ENCODE measurements at regions of chr20 and their contacts with region 1.

Region 1: DNA sequence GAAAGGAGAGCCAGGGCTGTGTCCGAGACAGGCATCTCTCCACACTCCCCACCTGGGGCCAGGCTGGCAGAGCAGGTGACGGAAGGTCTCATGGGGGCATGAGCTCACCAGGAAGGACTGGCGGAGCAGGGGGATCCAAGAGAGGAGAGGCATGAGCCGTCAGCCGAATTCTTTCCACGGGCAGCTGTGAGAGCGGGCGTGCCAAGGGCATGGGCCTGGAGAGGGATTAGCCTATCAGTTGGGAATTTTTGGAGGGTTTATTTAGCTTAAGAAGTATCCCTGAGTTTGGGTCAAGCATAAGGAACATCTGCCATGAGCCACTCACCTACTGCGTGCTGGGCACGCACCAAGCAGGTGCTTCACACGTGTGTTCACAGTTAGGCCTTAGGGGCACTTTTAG is 60.2 kb upstream of the ZNFX1 start:
- DNase-seq: no peak
- ATAC-seq: no peak
- H3K4me3 Mint-ChIP-seq: no peak overlapping the region
- H3K27ac Mint-ChIP-seq: no peak overlapping the region
- H3K4me1 Mint-ChIP-seq: no peaks in the 10 kb centered on the region
- H3K27me3 Mint-ChIP-seq: peaks cover 5% of the 10 kb centered on the region
- CTCF ChIP-seq: no peak

Region 2: GRCh38 chr20:49207076-49207475 is 131.0 kb before region 1 on chr20:
- CTCF ChIA-PET with region 1: no interaction called
- POLR2A ChIA-PET with region 1: no interaction called
- intact Hi-C with region 1: no loop called
- DNase-seq: peak; percentile 45
- ATAC-seq: peak; percentile 56
- H3K4me3 Mint-ChIP-seq: no peak overlapping the region
- H3K27ac Mint-ChIP-seq: no peak overlapping the region
- H3K4me1 Mint-ChIP-seq: no peaks in the 10 kb centered on the region
- H3K27me3 Mint-ChIP-seq: no peaks in the 10 kb centered on the region
- CTCF ChIP-seq: peak; percentile 26

Region 3: DNA sequence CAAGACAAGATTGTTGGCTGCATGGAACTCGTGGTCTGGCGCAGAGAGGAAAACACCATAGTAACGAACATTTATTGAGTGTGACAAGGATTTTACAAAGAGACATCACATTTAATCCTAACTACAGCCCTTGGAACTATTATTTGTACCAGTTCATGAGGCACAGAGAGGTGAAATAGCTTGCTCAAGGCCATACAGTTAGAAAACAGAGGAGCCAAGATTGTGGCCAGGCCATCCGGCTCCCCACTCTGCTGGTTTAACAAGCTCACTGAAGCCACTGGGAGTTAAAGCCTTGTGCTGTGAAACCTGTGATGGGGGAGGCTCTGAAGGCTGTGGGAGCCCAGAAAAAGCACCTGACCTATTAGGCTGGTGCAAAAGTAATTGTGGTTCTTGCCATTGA is 14.7 kb after region 1 on chr20:
- CTCF ChIA-PET with region 1: interaction called, 36 read pairs
- POLR2A ChIA-PET with region 1: no interaction called
- intact Hi-C with region 1: no loop called
- DNase-seq: no peak
- ATAC-seq: no peak
- H3K4me3 Mint-ChIP-seq: no peak overlapping the region
- H3K27ac Mint-ChIP-seq: no peak overlapping the region
- H3K4me1 Mint-ChIP-seq: no peaks in the 10 kb centered on the region
- H3K27me3 Mint-ChIP-seq: peaks cover 8% of the 10 kb centered on the region
- CTCF ChIP-seq: no peak

Region 4: DNA sequence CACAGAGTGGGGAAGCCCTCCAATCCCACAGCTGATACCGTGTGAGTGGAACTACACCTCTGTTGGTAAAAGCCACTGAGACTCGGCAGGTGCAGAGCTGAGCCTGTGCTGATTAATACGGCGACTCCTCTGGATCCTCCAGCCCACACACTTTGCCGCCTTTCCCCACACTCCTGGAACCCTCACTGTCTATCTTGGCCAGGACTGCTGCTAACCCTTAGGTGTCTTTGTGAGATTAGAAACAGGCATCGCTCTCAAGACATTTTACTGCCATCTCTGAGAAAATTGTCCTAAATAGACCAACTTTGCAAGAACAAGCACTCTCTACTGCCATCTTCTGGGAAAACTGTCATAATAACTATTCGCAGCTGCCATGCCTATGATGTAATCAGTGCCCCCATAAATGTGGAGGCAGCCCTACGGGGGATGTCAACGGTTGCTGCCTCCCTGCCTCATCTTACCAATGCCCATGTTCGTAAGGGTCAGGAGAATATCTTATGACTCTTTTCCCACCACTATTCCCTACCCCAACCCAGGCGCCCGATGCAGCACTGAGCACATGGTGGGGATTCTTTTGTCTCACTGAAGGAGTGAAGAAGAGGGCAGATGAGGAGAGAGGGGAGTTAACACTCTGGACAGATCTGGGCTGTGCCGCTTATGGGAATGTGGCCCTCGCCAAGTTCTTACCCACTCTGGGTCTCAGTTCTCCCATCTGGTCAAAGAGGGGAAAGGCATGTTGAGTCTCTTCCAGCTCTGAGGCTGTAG is 170.6 kb after region 1 on chr20:
- CTCF ChIA-PET with region 1: interaction called, 48 read pairs
- POLR2A ChIA-PET with region 1: no interaction called
- intact Hi-C with region 1: no loop called
- DNase-seq: peak; percentile 10
- ATAC-seq: peak; percentile 53
- H3K4me3 Mint-ChIP-seq: no peak overlapping the region
- H3K27ac Mint-ChIP-seq: no peak overlapping the region
- H3K4me1 Mint-ChIP-seq: no peaks in the 10 kb centered on the region
- H3K27me3 Mint-ChIP-seq: peaks cover 28% of the 10 kb centered on the region
- CTCF ChIP-seq: peak; percentile 60

Region 5: DNA sequence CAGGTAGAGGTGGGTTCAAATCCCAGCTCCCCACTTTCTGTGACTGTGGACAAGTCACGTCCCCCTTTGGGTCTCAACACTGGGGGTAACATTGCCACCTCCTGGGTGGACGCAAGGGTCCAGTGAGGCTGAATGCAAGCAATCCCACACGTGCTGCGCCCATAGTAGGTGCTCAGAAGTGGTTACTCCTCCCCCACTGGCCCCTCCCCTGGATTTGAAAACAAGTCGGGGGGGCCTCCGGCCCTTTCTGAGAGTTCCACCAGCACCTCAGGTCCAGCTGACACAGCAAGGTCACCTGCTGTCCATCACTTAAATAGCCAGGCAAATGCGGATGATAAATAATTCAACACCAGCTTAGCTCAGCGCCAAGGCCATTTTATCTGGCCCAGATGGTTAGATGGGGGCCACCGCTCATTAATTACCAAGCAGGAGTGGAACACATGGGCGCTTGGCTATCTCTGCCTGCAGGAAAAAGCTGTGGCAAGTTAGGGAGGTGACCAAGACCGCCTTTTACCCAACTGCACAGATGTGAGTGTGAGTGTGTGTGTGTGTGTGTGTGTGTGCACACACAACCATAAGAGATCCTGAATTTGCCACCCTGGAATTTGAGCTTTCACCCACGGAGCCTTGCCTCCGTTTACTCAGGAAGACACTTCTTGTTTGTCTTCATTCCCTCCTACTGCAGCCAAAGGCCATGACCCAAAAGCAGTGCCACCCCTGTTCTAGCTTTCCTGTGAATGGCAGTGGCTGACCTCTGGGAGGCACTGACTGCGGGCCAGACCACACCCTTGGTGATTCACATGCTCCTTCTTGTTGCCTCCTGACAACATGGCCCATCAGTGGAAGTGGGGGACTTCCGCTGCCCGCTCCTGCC is 179.1 kb after region 1 on chr20:
- CTCF ChIA-PET with region 1: interaction called, 11 read pairs
- POLR2A ChIA-PET with region 1: no interaction called
- intact Hi-C with region 1: no loop called
- DNase-seq: no peak
- ATAC-seq: no peak
- H3K4me3 Mint-ChIP-seq: no peak overlapping the region
- H3K27ac Mint-ChIP-seq: no peak overlapping the region
- H3K4me1 Mint-ChIP-seq: no peaks in the 10 kb centered on the region
- H3K27me3 Mint-ChIP-seq: peaks cover 9% of the 10 kb centered on the region
- CTCF ChIP-seq: no peak

Region 6: GRCh38 chr20:49534255-49534712 is 196.2 kb after region 1 on chr20:
- CTCF ChIA-PET with region 1: interaction called, 30 read pairs
- POLR2A ChIA-PET with region 1: no interaction called
- intact Hi-C with region 1: loop called (anchors 2 kb)
- DNase-seq: peak; percentile 81
- ATAC-seq: peak; percentile 76
- H3K4me3 Mint-ChIP-seq: no peak overlapping the region
- H3K27ac Mint-ChIP-seq: peak overlapping the region; percentile 90
- H3K4me1 Mint-ChIP-seq: peaks cover 20% of the 10 kb centered on the region
- H3K27me3 Mint-ChIP-seq: peaks cover 26% of the 10 kb centered on the region
- CTCF ChIP-seq: peak; percentile 97

Measured in activated CD8-positive, alpha-beta T cell treated with anti-CD3 and anti-CD28 coated beads for 36 hours (primary cell).